ENCODE measurements at regions of chr20 and their contacts with region 1.

Region 1: DNA sequence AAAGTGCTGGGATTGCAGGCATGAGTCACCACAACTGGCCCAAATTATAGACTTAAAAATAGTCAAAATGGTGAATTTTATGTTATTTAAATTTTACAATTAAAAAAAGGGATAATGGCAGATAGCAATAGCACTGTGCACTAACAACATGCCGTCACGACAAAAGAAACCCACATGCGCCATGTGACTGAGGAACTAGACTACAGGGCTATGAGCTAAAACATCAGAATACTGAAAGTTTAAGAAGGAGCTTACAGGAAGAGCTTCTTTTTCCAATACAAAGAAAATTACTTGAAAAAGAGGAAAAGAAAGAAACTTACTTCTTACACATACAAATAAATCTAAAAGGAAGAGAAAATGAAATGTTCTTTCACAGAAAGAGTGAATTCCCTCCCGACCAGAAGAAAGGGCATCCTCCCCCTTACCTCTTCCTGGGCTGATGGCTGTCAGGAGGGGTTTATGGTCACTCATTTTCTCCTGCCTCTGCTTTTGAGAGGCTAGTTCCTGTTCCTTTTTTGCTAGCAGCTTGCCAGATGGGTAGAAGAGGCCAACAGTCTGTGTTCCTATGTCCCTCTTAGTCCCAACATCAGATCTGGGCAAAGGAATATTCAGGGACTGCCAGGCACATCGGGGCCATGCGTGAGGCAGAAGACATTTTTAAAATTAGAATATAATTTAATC is 54.5 kb downstream of the DZANK1 start:
- DNase-seq: no peak
- H3K4me3 ChIP-seq: no peak overlapping the region
- H3K27ac ChIP-seq: no peak overlapping the region
- H3K4me1 ChIP-seq: no peaks in the 10 kb centered on the region
- H3K27me3 ChIP-seq: no peaks in the 10 kb centered on the region
- CTCF ChIP-seq: no peak

Region 2: DNA sequence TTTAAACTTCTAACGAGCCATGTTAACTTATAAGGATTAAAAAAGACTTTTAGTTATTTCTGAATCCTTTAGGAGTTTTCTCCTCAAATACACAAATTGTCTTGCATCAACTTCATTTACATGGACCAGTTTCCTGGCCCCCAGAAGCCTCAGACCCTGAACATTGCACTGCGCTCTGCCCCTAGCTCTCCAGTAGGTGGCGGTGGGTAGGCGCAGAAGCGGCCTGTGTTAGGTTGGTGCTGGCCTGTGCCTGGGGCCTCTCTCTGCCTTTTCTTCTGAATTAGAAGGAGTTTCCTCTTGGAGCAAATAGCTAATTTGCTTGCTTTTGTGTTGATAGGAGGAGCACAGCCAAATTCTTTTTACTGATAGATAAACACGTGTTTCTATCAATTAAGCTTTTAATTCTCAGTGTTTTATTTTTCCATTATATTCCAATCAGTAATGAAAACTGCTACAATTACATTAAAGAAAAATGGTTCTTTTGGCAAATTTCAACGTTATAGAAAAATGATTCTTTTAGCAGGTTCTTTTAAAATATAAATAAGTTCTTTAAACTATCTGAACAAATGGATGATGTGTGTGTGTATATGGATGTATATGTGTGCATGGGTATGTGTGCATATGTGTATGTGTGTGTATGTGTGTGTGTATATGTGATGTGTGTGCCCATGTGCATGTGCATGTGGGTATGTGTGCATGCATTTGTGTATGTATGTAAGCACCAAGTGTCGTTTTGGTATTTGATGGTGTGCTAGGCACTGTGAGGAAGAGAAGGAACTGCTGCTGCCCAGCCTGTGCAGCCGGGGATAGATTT is 220.0 kb after region 1 on chr20:
- CTCF ChIA-PET with region 1: interaction called, 12 read pairs
- POLR2A ChIA-PET with region 1: no interaction called
- intact Hi-C with region 1: no loop called
- DNase-seq: peak in 1 of 2 experiments; percentile 57
- H3K4me3 ChIP-seq: no peak overlapping the region
- H3K27ac ChIP-seq: no peak overlapping the region
- H3K4me1 ChIP-seq: no peaks in the 10 kb centered on the region
- H3K27me3 ChIP-seq: no peaks in the 10 kb centered on the region
- CTCF ChIP-seq: peak; percentile 95